ENCODE measurements at regions of chr13 and their contacts with region 1.

Region 1: GRCh38 chr13:99246100-99246499 is 12.1 kb downstream of the GPR18 start:
- DNase-seq: no peak
- ATAC-seq: no peak
- H3K4me3 ChIP-seq: no peak overlapping the region
- H3K27ac ChIP-seq: no peak overlapping the region
- H3K4me1 ChIP-seq: no peaks in the 10 kb centered on the region
- H3K27me3 ChIP-seq: no peaks in the 10 kb centered on the region
- CTCF ChIP-seq: no peak

Region 2: DNA sequence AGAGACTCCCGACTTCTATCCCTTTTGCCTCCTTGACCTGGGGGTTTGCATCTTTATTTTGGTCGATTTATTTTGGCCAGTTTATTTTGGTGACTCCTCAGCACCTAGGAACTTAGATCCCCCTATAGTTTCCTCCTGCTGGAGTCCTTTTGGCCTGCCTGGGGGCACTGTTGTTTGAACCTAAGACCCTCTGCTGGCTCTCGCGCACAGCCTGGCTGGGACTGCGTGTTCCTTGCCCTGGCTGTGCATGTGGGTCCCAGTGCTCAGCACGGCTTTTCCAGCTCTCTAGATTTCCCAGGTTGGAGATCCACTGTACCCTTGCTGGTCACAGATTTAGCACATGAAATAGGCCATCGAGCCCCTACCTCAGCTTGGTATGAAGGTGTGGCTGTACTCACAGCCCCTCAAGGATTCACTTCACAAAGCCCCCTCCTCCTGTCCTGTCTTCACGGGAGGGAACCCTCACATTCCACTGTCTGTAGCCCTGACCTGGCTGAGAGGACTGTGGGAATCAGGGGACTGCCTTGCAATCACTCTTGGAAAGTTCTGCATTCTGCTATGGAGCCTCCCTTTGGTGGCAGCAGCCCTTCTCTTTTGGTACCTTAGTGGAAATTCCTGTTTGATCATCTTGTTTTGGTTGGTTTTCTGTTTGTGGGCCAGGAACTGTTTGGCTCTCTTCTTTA is 37.1 kb before region 1 on chr13:
- intact Hi-C with region 1: loop called in 1 of 2 experiments (anchors 5 kb)
- DNase-seq: no peak
- ATAC-seq: peak in 1 of 4 donors; percentile 28
- H3K4me3 ChIP-seq: no peak overlapping the region
- H3K27ac ChIP-seq: no peak overlapping the region
- H3K4me1 ChIP-seq: peaks cover 8% of the 10 kb centered on the region
- H3K27me3 ChIP-seq: no peaks in the 10 kb centered on the region
- CTCF ChIP-seq: no peak

Measured in psoas muscle (tissue), 8 donors.